Endothelial cell of umbilical vein (primary cell): ENCODE measurements at regions of chrX and their contacts with region 1.

Region 1: GRCh38 chrX:34656842-34657725 is at the start of gene TMEM47:
- DNase-seq: peak; percentile 83
- H3K4me3 ChIP-seq: peak within 1 kb of the TSS; percentile 59 to 95 (median 91)
- H3K27ac ChIP-seq: peak within 1 kb of the TSS; percentile 74
- H3K4me1 ChIP-seq: peaks cover 13% of the 10 kb centered on the region
- H3K27me3 ChIP-seq: no peaks in the 10 kb centered on the region
- CTCF ChIP-seq: peak in 1 of 2 donors; percentile 5
- POLR2A ChIP-seq: peak; percentile 74
- total RNA-seq, gene TMEM47: 22.2 and 26.8 TPM in 2 replicates

Region 2: GRCh38 chrX:34365482-34365881 is 291.6 kb before region 1 on chrX:
- CTCF ChIA-PET with region 1: interaction called, 3 read pairs
- POLR2A ChIA-PET with region 1: no interaction called
- dilution Hi-C with region 1: no loop called
- intact Hi-C with region 1: loop called (anchors 5 kb)
- DNase-seq: peak; percentile 65
- H3K4me3 ChIP-seq: no peak overlapping the region
- H3K27ac ChIP-seq: no peak overlapping the region
- H3K4me1 ChIP-seq: no peaks in the 10 kb centered on the region
- H3K27me3 ChIP-seq: no peaks in the 10 kb centered on the region
- CTCF ChIP-seq: peak; percentile 35
- POLR2A ChIP-seq: no peak

Region 3: GRCh38 chrX:34503119-34503518 is 154.0 kb before region 1 on chrX:
- CTCF ChIA-PET with region 1: interaction called, 4 read pairs
- POLR2A ChIA-PET with region 1: no interaction called
- dilution Hi-C with region 1: no loop called
- intact Hi-C with region 1: loop called (anchors 10 kb)
- DNase-seq: peak; percentile 74
- H3K4me3 ChIP-seq: peak overlapping the region in 1 of 3 experiments; percentile 36
- H3K27ac ChIP-seq: no peak overlapping the region
- H3K4me1 ChIP-seq: peaks cover 6% of the 10 kb centered on the region
- H3K27me3 ChIP-seq: no peaks in the 10 kb centered on the region
- CTCF ChIP-seq: no peak
- POLR2A ChIP-seq: no peak

Region 4: GRCh38 chrX:34956916-34957315 is 299.8 kb after region 1 on chrX:
- CTCF ChIA-PET with region 1: no interaction called
- POLR2A ChIA-PET with region 1: no interaction called
- dilution Hi-C with region 1: no loop called
- intact Hi-C with region 1: loop called (anchors 5 kb)
- DNase-seq: peak; percentile 51
- H3K4me3 ChIP-seq: no peak overlapping the region
- H3K27ac ChIP-seq: peak overlapping the region; percentile 48
- H3K4me1 ChIP-seq: peaks cover 10% of the 10 kb centered on the region
- H3K27me3 ChIP-seq: no peaks in the 10 kb centered on the region
- CTCF ChIP-seq: no peak
- POLR2A ChIP-seq: no peak